ENCODE measurements at regions of chr18 and their contacts with region 1.

Region 1: GRCh38 chr18:3593904-3594661 is 144.1 kb downstream of the TGIF1 start:
- DNase-seq: peak; percentile 93 to 96 (median 95)
- H3K4me3 ChIP-seq: peak overlapping the region; percentile 68 to 72
- H3K4me3 Mint-ChIP-seq: peak overlapping the region; percentile 88 to 95 (median 91)
- H3K27ac ChIP-seq: peak overlapping the region; percentile 91
- H3K27ac Mint-ChIP-seq: peak overlapping the region; percentile 98 to 100 (median 99)
- H3K4me1 ChIP-seq: peaks cover 53% of the 10 kb centered on the region
- H3K4me1 Mint-ChIP-seq: peaks cover 37 to 66% (median 49%) of the 10 kb centered on the region in 4 donors
- H3K27me3 ChIP-seq: no peaks in the 10 kb centered on the region
- H3K27me3 Mint-ChIP-seq: no peaks in the 10 kb centered on the region

Region 2: GRCh38 chr18:2958819-2959298 is 635.2 kb before region 1 on chr18:
- CTCF ChIA-PET with region 1: no interaction called
- POLR2A ChIA-PET with region 1: interaction called, 4 read pairs
- intact Hi-C with region 1: loop called (anchors 5 kb)
- DNase-seq: peak in 2 of 5 donors; percentile 37 to 64
- H3K4me3 ChIP-seq: peak overlapping the region in 1 of 2 donors; percentile 9
- H3K4me3 Mint-ChIP-seq: peak overlapping the region; percentile 4 to 89 (median 73)
- H3K27ac ChIP-seq: peak overlapping the region; percentile 79
- H3K27ac Mint-ChIP-seq: peak overlapping the region; percentile 88 to 99 (median 98)
- H3K4me1 ChIP-seq: peaks cover 95% of the 10 kb centered on the region
- H3K4me1 Mint-ChIP-seq: peaks cover 68 to 97% (median 85%) of the 10 kb centered on the region in 4 donors
- H3K27me3 ChIP-seq: no peaks in the 10 kb centered on the region
- H3K27me3 Mint-ChIP-seq: no peaks in the 10 kb centered on the region

Region 3: DNA sequence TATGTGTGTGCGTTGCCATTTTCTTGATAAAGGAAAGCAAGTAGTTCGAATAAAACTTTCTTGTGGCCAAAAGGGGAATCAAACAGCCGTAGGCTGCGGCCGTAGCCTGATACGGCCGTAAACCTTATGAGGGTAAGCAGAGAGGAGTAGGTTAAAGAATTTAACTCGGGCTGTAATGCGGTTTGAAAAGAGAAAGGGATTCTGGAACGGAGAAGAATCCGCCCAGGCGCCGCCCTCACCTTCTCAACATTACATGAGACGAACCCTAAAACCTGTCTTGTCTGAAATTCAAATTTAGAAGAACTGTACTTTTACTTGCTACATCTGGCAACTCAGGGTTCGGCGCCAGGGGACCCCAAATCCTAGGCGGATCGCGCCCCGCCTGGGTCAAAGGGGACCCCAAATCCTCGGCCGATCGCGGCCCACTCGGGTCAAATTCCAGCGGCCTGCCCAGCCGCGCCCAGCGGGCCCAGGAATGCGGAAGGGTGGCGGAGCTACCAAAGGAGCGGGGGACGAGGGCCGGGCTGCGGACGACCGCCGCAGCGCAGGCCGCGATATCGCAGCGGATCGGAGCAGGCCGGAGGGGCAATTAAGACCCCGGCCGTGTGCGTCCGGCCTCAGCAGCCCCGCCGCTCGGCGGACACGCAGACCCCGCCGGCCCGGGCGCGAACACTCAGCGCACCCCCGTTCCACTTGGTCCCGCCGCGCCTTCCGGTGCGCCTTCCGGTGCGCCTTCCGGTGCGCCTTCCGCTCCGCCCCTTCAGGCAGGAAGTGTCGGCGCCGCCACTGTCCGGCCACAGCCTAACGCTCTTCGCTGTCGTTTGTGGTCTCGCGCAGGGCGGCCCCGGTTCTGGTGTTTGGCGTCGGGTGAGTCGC is 332.5 kb before region 1 on chr18 and contains the start of gene MYL12B:
- CTCF ChIA-PET with region 1: interaction called, 6 read pairs
- POLR2A ChIA-PET with region 1: interaction called, 33 read pairs
- intact Hi-C with region 1: no loop called
- DNase-seq: peak; percentile 83 to 91 (median 86)
- H3K4me3 ChIP-seq: peak within 1 kb of the TSS; percentile 89 to 94
- H3K4me3 Mint-ChIP-seq: peak within 1 kb of the TSS; percentile 94 to 100 (median 98)
- H3K27ac ChIP-seq: peak within 1 kb of the TSS; percentile 90
- H3K27ac Mint-ChIP-seq: peak within 1 kb of the TSS; percentile 98 to 100 (median 99)
- H3K4me1 ChIP-seq: peaks cover 81% of the 10 kb centered on the region
- H3K4me1 Mint-ChIP-seq: peaks cover 57 to 92% (median 70%) of the 10 kb centered on the region in 4 donors
- H3K27me3 ChIP-seq: no peaks in the 10 kb centered on the region
- H3K27me3 Mint-ChIP-seq: no peaks in the 10 kb centered on the region
- total RNA-seq, gene MYL12B: 199 to 219 TPM

Region 4: GRCh38 chr18:3297025-3297984 is 296.8 kb before region 1 on chr18:
- CTCF ChIA-PET with region 1: interaction called, 15 read pairs
- POLR2A ChIA-PET with region 1: interaction called, 35 read pairs
- intact Hi-C with region 1: loop called (anchors 1 kb)
- DNase-seq: peak; percentile 88 to 95 (median 90)
- H3K4me3 ChIP-seq: peak overlapping the region; percentile 71 to 86
- H3K4me3 Mint-ChIP-seq: peak overlapping the region; percentile 91 to 98 (median 94)
- H3K27ac ChIP-seq: peak overlapping the region; percentile 44
- H3K27ac Mint-ChIP-seq: peak overlapping the region; percentile 51 to 96 (median 90)
- H3K4me1 ChIP-seq: peaks cover 9% of the 10 kb centered on the region
- H3K4me1 Mint-ChIP-seq: peaks cover 2 to 15% (median 10%) of the 10 kb centered on the region in 4 donors
- H3K27me3 ChIP-seq: no peaks in the 10 kb centered on the region
- H3K27me3 Mint-ChIP-seq: peaks cover 8 to 13% of the 10 kb centered on the region in 2 donors

Region 5: GRCh38 chr18:3525870-3526420 is 68.1 kb before region 1 on chr18:
- CTCF ChIA-PET with region 1: interaction called, 17 read pairs
- POLR2A ChIA-PET with region 1: interaction called, 9 read pairs
- intact Hi-C with region 1: no loop called
- DNase-seq: peak; percentile 67 to 75 (median 71)
- H3K4me3 ChIP-seq: peak overlapping the region in 1 of 2 donors; percentile 47
- H3K4me3 Mint-ChIP-seq: peak overlapping the region; percentile 72 to 89 (median 82)
- H3K27ac ChIP-seq: no peak overlapping the region
- H3K27ac Mint-ChIP-seq: peak overlapping the region; percentile 25 to 86 (median 77)
- H3K4me1 ChIP-seq: peaks cover 16% of the 10 kb centered on the region
- H3K4me1 Mint-ChIP-seq: peaks cover 12 to 20% (median 15%) of the 10 kb centered on the region in 4 donors
- H3K27me3 ChIP-seq: no peaks in the 10 kb centered on the region
- H3K27me3 Mint-ChIP-seq: no peaks in the 10 kb centered on the region

Region 6: GRCh38 chr18:3753106-3753505 is 159.0 kb after region 1 on chr18:
- CTCF ChIA-PET with region 1: no interaction called
- POLR2A ChIA-PET with region 1: no interaction called
- intact Hi-C with region 1: no loop called
- DNase-seq: no peak
- H3K4me3 ChIP-seq: no peak overlapping the region
- H3K4me3 Mint-ChIP-seq: no peak overlapping the region
- H3K27ac ChIP-seq: no peak overlapping the region
- H3K27ac Mint-ChIP-seq: no peak overlapping the region
- H3K4me1 ChIP-seq: no peaks in the 10 kb centered on the region
- H3K4me1 Mint-ChIP-seq: no peaks in the 10 kb centered on the region
- H3K27me3 ChIP-seq: no peaks in the 10 kb centered on the region
- H3K27me3 Mint-ChIP-seq: peaks cover 9 to 10% of the 10 kb centered on the region in 2 donors

Region 7: GRCh38 chr18:4134700-4135099 is 540.6 kb after region 1 on chr18:
- CTCF ChIA-PET with region 1: no interaction called
- POLR2A ChIA-PET with region 1: no interaction called
- intact Hi-C with region 1: no loop called
- DNase-seq: no peak
- H3K4me3 ChIP-seq: no peak overlapping the region
- H3K4me3 Mint-ChIP-seq: no peak overlapping the region
- H3K27ac ChIP-seq: no peak overlapping the region
- H3K27ac Mint-ChIP-seq: no peak overlapping the region
- H3K4me1 ChIP-seq: no peaks in the 10 kb centered on the region
- H3K4me1 Mint-ChIP-seq: no peaks in the 10 kb centered on the region
- H3K27me3 ChIP-seq: no peaks in the 10 kb centered on the region
- H3K27me3 Mint-ChIP-seq: no peaks in the 10 kb centered on the region

Measured in CD4-positive, alpha-beta memory T cell (primary cell).